ENCODE measurements at regions of chr10 and their contacts with region 1.

Region 1: DNA sequence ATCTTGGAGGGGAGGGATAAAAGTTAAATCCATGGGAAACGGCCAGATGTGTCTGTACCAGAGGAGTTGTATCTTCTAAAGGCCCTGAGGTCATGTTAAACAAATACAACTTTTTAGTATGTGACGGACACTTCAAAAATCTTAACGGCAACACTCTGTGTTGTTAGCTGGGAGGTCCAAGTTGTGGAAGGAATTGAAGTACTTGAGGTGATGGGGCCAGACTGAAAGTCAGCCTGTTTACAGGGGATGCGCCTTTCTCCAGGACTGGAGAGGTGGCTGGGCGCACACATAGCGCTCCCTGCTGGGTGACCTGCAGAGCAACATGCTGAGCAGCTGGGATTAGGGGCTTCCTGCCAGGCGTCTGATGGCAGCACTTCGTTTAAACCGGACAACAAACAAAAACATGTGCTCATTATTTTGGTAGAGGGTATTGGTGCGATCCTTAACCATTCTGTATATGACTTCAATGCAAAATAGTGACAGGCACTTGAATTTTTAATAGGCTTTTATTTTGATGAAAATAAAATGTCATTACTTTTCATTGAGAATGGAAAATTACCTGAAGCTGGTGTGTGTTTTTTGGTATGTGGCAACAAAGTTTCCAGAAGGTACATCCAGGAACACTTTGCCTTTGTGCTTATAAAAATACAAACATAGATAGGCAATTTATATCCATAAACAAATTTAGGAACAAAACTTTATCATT is 198.2 kb downstream of the MLLT10 start:
- DNase-seq: peak; percentile 74
- ATAC-seq: peak; percentile 93 to 94

Region 2: DNA sequence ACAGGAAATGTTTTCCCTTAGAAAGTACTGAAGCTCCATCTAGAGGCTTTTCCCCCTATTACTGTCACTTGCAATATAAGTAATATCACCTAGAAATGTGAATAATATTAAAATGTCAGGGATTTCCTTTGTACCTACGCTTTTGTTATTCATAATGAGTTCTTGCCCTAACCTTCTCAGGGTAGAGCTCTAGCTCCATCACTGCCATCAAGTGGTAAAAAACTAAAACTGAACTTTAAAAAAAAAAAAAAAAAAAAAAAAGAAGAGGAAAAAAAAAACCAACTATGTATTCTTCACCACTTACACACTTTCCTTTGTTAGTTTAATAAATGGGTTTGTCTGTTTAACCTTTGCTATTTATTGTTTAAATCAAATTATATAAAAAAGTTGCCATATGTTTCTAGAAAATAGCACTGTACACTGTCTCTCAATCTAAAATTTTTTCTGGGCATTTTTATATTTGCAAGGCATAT is 221.4 kb after region 1 on chr10:
- intact Hi-C with region 1: loop called in 1 of 2 experiments (anchors 10 kb)
- DNase-seq: no peak
- ATAC-seq: peak; percentile 21 to 44

Measured in left cardiac atrium (tissue), 4 donors.